ENCODE measurements at regions of chr6 and their contacts with region 1.

Region 1: GRCh38 chr6:137094411-137095008 is 49.7 kb upstream of the IL20RA start:
- DNase-seq: peak; percentile 91
- ATAC-seq: peak; percentile 58
- H3K4me3 ChIP-seq: 0 out of 2 replicates have a peak overlapping the region, but pooled peaks have one; percentile 0
- H3K27ac ChIP-seq: peak overlapping the region; percentile 95
- H3K4me1 ChIP-seq: peaks cover 55% of the 10 kb centered on the region
- H3K27me3 ChIP-seq: no peaks in the 10 kb centered on the region
- CTCF ChIP-seq: peak; percentile 70 to 87 (median 76)
- EP300 ChIP-seq: peak in 1 of 2 experiments; percentile 32; a peak in 1 of 4 replicates
- POLR2A ChIP-seq: no peak
- RAD21 ChIP-seq: peak; percentile 93

Region 2: DNA sequence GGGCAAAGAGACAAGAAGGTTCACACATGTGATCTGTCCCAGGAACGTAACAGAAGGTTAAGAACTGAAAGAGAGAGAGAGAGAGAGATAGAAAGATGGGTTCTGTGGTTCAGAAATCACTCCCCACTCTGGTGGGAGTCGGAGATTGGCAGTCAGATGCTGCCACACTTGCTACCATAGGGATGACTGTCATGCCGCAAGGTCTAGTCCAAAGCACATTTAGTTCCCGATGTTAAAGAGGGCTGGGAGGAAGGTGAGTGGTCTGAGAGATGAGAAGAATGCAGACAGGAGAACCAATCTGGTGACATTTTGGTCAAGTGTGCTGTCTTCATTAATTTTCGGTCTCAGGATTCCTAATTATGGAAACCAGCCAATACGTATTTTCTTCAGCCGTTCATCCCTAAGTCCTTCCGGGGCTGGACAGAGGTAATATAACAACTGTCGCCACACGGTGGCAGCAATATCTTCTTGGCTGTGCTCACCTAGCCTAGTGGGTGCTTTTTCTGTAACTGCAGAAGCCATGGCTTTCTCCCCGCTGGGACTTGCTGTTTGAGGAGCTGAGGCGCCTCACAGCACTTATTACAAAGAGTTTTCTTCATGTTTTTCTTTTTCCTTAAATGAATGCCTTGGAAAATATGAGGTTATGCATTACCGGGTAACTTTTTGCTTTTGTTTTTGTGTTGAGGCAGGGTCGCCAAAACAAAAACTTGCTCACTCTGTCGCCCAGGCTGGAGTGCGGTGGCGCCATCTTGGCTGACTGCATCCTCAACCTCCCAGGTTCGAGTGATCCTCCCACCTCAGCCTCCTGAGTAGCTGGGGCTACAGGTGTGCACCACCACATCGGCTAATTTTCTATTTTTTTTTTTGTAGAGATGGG is 126.4 kb before region 1 on chr6:
- CTCF ChIA-PET with region 1: interaction called, 5 read pairs
- POLR2A ChIA-PET with region 1: no interaction called
- RAD21 ChIA-PET with region 1: interaction called, 3 read pairs
- SMC1A ChIA-PET with region 1: interaction called, 5 read pairs
- in situ Hi-C with region 1: no loop called
- intact Hi-C with region 1: loop called (anchors 1 kb)
- DNase-seq: peak; percentile 35
- ATAC-seq: peak; percentile 99
- H3K4me3 ChIP-seq: no peak overlapping the region
- H3K27ac ChIP-seq: no peak overlapping the region
- H3K4me1 ChIP-seq: no peaks in the 10 kb centered on the region
- H3K27me3 ChIP-seq: no peaks in the 10 kb centered on the region
- CTCF ChIP-seq: peak; percentile 62 to 82 (median 71); a peak in 5 of 6 replicates
- EP300 ChIP-seq: no peak
- POLR2A ChIP-seq: no peak
- RAD21 ChIP-seq: peak; percentile 78

Region 3: GRCh38 chr6:137136065-137136464 is 41.6 kb after region 1 on chr6:
- CTCF ChIA-PET with region 1: no interaction called
- POLR2A ChIA-PET with region 1: no interaction called
- RAD21 ChIA-PET with region 1: no interaction called
- SMC1A ChIA-PET with region 1: no interaction called
- in situ Hi-C with region 1: no loop called
- intact Hi-C with region 1: no loop called
- DNase-seq: no peak
- ATAC-seq: no peak
- H3K4me3 ChIP-seq: no peak overlapping the region
- H3K27ac ChIP-seq: no peak overlapping the region
- H3K4me1 ChIP-seq: no peaks in the 10 kb centered on the region
- H3K27me3 ChIP-seq: no peaks in the 10 kb centered on the region
- CTCF ChIP-seq: no peak
- EP300 ChIP-seq: no peak
- POLR2A ChIP-seq: no peak
- RAD21 ChIP-seq: no peak

Region 4: GRCh38 chr6:137165375-137166246 is 71.1 kb after region 1 on chr6:
- CTCF ChIA-PET with region 1: interaction called, 160 read pairs
- POLR2A ChIA-PET with region 1: interaction called, 62 read pairs
- RAD21 ChIA-PET with region 1: interaction called, 500 read pairs
- SMC1A ChIA-PET with region 1: interaction called, 293 read pairs
- in situ Hi-C with region 1: no loop called
- intact Hi-C with region 1: loop called (anchors 1 kb)
- DNase-seq: peak; percentile 85
- ATAC-seq: peak; percentile 86
- H3K4me3 ChIP-seq: no peak overlapping the region
- H3K27ac ChIP-seq: peak overlapping the region; percentile 93
- H3K4me1 ChIP-seq: peaks cover 37% of the 10 kb centered on the region
- H3K27me3 ChIP-seq: no peaks in the 10 kb centered on the region
- CTCF ChIP-seq: peak; percentile 57 to 81 (median 58)
- EP300 ChIP-seq: 0 out of 4 replicates have a peak, but pooled peaks of 1 of the 2 experiments have one; percentile 47
- POLR2A ChIP-seq: no peak
- RAD21 ChIP-seq: peak; percentile 95

Region 5: DNA sequence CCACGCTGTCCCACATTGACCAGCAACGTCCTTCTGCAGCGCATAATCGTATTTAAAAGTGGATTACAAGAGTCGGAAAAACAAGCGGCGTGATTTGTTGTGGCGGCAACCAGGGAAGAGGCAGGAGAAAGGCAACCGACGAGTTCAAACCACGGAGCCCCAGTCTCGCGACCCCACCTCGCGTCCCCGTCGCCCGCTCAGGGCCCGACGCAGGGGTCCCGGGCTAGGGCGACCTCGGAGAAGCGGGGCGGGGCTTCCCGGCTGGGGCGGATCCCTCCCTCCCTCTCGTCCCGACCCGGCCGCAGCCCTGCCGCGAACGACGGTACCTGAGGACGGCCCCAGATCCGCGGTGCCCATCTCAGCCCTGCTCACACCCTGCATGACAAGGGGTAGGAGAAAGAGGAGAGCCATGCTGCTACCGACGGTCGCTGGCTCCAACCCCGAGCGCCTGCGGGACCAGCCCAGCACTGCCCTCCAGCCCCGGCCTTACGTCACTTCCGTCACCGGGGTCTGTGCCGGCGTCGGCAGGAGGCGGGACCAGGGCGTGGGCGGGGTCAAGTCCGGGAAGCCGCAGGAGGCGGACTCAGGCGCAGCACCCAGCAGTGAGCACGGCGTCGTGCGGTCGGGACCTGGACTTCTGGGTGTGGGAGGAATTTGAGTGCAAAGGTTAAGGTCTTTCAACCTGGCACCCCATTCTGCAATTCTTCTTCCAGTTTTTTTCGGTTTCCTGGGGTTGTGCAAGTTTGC is 124.6 kb after region 1 on chr6 and contains the start of gene IFNGR1:
- CTCF ChIA-PET with region 1: interaction called, 19 read pairs
- POLR2A ChIA-PET with region 1: interaction called, 8 read pairs
- RAD21 ChIA-PET with region 1: interaction called, 54 read pairs
- SMC1A ChIA-PET with region 1: interaction called, 89 read pairs
- in situ Hi-C with region 1: no loop called
- intact Hi-C with region 1: loop called (anchors 2 kb)
- DNase-seq: peak; percentile 81
- ATAC-seq: peak; percentile 79
- H3K4me3 ChIP-seq: peak within 1 kb of the TSS; percentile 91
- H3K27ac ChIP-seq: peak within 1 kb of the TSS; percentile 94
- H3K4me1 ChIP-seq: peaks cover 15% of the 10 kb centered on the region
- H3K27me3 ChIP-seq: no peaks in the 10 kb centered on the region
- CTCF ChIP-seq: no peak
- EP300 ChIP-seq: no peak
- POLR2A ChIP-seq: peak; percentile 94
- RAD21 ChIP-seq: no peak
- polyA plus RNA-seq, gene IFNGR1: 182 to 296 TPM

Region 6: DNA sequence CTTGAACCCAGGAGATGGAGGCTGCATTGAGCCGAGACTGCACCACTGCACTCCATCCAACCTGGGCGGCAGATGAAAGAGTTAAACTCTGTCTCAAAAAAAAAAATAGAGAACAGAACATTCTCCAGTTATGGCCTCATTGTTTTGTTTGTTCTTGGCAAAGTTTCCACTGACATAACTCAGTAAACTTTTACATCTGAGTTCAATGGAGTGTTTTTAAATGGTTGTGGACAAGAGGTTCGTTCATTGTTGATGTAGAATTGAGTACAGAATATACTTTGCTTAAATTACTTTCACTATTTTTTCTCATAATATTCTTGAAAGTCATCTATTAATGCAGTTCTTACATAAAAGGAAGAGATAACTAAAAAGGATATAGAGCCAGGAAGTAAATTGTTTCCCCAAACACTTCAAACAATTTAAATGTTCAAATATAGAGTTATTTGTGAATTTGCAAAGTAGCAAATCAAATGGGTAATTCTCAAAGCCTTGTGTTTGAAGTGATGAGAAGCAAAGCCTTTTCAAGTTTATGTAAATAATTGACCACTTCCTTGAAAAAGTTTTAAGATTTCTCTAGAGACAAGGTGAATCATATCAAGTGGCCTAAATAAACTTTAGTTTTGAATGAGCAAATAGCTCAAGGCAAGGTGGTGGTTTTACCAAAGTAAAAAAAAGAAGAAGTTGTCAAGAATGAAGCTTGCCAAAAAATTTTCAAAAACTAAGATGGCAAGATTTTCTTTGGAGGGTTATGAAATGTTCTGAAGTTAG is 167.1 kb after region 1 on chr6:
- CTCF ChIA-PET with region 1: interaction called, 12 read pairs
- POLR2A ChIA-PET with region 1: interaction called, 4 read pairs
- RAD21 ChIA-PET with region 1: interaction called, 20 read pairs
- SMC1A ChIA-PET with region 1: interaction called, 16 read pairs
- in situ Hi-C with region 1: loop called (anchors 5 kb)
- intact Hi-C with region 1: no loop called
- DNase-seq: peak; percentile 72
- ATAC-seq: peak; percentile 77
- H3K4me3 ChIP-seq: no peak overlapping the region; the same call in 1 of the 2 replicates
- H3K27ac ChIP-seq: peak overlapping the region; percentile 54
- H3K4me1 ChIP-seq: peaks cover 13% of the 10 kb centered on the region
- H3K27me3 ChIP-seq: no peaks in the 10 kb centered on the region
- CTCF ChIP-seq: no peak
- EP300 ChIP-seq: peak; percentile 52 to 84; a peak in 3 of 4 replicates
- POLR2A ChIP-seq: no peak
- RAD21 ChIP-seq: no peak

Region 7: GRCh38 chr6:137323860-137324259 is 229.3 kb after region 1 on chr6:
- CTCF ChIA-PET with region 1: interaction called, 4 read pairs
- POLR2A ChIA-PET with region 1: no interaction called
- RAD21 ChIA-PET with region 1: interaction called, 10 read pairs
- SMC1A ChIA-PET with region 1: interaction called, 12 read pairs
- in situ Hi-C with region 1: no loop called
- intact Hi-C with region 1: no loop called
- DNase-seq: no peak
- ATAC-seq: peak; percentile 66
- H3K4me3 ChIP-seq: no peak overlapping the region
- H3K27ac ChIP-seq: no peak overlapping the region
- H3K4me1 ChIP-seq: no peaks in the 10 kb centered on the region
- H3K27me3 ChIP-seq: no peaks in the 10 kb centered on the region
- CTCF ChIP-seq: no peak
- EP300 ChIP-seq: no peak
- POLR2A ChIP-seq: no peak
- RAD21 ChIP-seq: no peak